ENCODE measurements at regions of chr11 and their contacts with region 1.

Region 1: DNA sequence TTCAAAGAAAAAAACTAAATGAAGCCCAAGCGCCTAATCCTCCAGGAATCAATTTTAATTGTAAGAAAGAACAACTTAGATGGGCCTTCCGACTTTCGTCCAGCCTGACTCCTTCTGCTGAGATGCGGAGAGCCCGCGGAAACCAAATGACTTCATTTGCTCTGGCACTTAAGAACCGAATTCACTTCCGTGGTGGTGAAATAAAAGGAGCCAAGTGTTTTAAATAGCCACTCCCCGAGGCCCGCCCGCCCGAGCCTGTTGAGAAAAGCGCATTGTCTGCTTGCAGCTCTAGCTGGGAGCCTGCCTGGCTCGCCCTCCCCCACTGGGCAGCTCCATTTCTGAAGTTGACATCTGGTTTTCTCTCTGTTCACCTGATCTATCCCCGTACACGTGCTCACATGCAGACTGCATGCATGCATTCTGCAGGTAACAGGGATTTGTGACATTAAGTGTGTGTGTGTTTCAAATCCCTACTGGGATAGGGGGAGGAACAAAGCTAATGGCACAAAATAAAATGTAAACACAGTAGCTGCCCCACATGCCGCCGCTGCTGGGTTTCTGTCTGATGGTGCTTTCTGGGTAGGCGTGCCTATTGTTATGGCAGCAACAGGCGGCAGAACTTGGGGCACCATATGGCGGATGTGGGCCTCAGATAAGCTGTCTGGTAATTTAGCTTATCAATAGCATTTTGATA is 6.2 kb downstream of the TEAD1 start:
- DNase-seq: peak; percentile 86 to 88
- H3K4me3 ChIP-seq: peak overlapping the region in 3 of 4 experiments; percentile 1 to 52 (median 27); a peak in 5 of 8 replicates
- H3K27ac ChIP-seq: peak overlapping the region; percentile 41
- H3K4me1 ChIP-seq: peaks cover 13 to 58% (median 40%) of the 10 kb centered on the region in 4 experiments
- H3K27me3 ChIP-seq: peaks cover 0 to 14% (median 4%) of the 10 kb centered on the region in 4 experiments; a peak in 5 of 7 replicates
- CTCF ChIP-seq: no peak
- EP300 ChIP-seq: peak in 1 of 2 experiments; percentile 44; a peak in 1 of 3 replicates
- POLR2A ChIP-seq: peak in 1 of 2 experiments; percentile 7
- RAD21 ChIP-seq: no peak

Region 2: DNA sequence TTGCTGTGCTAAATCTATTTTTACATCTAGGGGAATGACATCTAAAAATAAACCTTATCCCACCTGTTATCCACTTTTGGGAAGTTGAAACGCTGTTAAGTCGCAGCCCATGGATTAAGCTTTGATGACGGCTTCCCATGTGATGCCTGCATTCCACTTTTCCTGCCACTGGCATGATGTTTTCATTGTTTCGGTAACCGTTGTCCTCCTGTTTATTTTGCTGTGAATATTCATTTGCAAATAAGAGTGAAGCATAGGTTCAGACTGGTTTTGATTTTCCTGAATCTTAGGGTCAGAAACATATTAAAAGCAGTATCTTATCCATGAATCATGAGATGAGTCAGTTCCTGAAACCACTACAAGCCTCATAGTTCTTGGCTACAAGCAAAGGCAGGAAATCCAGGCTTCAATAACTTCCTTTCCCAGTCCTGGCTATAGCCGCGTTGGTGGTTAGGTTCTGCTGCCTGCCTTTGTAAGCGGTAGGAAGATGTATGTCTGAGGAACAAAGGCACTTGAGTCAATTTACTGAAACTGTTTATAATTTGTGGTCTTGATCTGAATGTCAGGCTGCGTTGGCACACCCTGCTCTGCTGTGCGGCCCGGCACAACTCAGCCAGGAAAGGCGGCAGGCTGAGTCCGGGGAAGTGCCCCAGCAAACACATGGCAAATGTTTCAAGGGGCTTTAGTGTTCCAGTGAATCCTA is 13.2 kb after region 1 on chr11:
- CTCF ChIA-PET with region 1: interaction called, 15 read pairs
- POLR2A ChIA-PET with region 1: interaction called, 12 read pairs
- DNase-seq: no peak
- H3K4me3 ChIP-seq: no peak overlapping the region
- H3K27ac ChIP-seq: no peak overlapping the region
- H3K4me1 ChIP-seq: peaks cover 16 to 47% (median 33%) of the 10 kb centered on the region in 4 experiments
- H3K27me3 ChIP-seq: peaks cover 0 to 1% (median 0%) of the 10 kb centered on the region in 4 experiments; a peak in 3 of 7 replicates
- CTCF ChIP-seq: no peak
- EP300 ChIP-seq: no peak
- POLR2A ChIP-seq: no peak
- RAD21 ChIP-seq: no peak

Measured in H1 (cell line).